ENCODE measurements at regions of chr1 and their contacts with region 1.

Region 1: DNA sequence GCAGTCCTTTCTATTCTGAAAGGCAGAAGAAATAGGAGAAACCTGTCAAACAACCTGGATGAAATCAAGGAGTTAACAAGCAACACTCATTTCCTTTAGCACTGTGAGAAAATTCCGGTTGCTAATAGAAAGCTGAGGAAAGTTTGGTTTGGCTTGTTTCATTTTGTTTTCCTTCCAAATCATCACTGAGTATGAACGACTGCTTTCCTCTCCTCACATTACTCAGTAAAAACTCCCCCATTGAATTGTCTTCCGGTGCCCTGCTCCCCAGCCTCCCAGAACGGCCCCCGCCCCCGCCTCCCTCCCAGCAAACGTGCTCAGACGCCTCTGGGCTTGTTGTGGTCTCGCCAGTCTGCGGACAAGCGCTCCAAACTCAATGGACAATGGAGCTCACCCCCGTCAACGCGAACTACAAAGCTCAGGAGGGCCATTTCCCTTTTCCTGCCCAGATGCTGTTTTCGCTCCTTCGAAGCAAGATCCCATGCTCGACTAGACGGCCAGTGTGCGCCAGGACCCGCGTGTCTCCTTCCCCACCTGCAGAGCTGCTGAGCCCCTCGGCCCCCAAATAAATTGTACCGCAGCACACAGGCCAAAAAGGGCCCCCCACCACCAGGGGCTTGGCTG is 747 bp downstream of the STX6 start:
- DNase-seq: peak in 9 of 10 donors; percentile 29 to 89 (median 51)

Region 2: GRCh38 chr1:180154325-180155181 is 867.4 kb before region 1 on chr1 and contains the start of gene QSOX1:
- intact Hi-C with region 1: loop called (anchors 10 kb)
- DNase-seq: peak; percentile 79 to 98 (median 90)

Region 3: DNA sequence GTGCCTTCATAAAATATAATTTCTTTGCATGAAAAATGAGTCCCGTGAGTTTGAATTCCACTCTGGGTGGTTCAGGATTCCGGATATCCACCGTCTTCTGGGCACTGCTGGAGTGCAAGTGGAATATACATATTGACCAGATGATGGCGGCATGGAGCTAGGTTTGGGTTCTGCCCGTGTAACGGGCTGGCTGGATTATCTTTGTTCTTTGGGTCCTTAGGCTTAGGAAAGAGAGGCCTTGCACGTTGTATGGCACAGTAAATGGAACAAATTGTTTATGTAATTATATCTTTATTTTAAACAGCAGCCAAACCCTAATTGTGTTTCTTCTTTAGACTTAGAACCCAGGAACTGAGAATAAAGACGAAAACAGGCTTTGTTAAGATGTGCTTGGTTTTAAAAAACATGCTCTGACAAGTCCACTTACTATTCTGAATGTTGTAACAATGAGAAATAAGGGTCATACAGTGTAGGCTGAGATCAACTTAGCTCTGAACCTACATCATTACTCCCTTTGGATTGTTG is 506.0 kb before region 1 on chr1:
- intact Hi-C with region 1: loop called (anchors 10 kb)
- DNase-seq: peak in 9 of 10 donors; percentile 28 to 95 (median 69)

Region 4: DNA sequence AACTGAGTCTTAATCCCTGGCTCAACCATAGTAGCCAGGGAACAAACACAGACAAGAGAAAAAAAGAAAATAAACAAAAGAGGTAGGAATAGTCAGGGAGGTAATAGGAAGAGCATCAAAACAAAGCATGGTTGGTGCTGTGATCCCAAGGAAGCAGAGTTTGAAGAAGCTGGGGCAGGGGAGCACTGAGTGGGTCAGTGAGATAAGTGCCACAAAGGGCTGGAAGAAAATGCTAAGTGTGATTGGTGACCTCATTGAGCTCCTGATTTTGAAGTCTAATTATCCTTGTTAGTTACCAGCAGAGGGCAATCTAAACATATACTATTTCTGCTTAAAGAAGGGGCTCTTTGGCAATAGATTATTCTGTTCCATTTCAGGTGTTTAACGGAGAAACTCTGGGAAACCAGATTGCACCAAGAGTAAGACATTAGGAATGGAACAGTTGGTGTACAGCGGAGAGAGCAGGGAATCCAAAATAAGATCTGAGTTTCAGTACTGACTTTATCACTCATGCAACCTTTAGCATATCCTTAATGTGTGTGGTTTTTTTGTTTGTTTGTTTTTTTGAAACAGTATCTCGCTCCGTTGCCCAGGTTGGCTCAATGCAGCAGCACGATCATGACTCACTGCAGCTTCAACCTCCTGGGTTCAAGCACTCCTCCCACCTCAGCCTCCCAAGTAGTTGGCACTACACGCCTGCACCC is 140.0 kb before region 1 on chr1:
- intact Hi-C with region 1: loop called (anchors 5 kb)
- DNase-seq: peak in 1 of 10 donors; percentile 51

Region 5: DNA sequence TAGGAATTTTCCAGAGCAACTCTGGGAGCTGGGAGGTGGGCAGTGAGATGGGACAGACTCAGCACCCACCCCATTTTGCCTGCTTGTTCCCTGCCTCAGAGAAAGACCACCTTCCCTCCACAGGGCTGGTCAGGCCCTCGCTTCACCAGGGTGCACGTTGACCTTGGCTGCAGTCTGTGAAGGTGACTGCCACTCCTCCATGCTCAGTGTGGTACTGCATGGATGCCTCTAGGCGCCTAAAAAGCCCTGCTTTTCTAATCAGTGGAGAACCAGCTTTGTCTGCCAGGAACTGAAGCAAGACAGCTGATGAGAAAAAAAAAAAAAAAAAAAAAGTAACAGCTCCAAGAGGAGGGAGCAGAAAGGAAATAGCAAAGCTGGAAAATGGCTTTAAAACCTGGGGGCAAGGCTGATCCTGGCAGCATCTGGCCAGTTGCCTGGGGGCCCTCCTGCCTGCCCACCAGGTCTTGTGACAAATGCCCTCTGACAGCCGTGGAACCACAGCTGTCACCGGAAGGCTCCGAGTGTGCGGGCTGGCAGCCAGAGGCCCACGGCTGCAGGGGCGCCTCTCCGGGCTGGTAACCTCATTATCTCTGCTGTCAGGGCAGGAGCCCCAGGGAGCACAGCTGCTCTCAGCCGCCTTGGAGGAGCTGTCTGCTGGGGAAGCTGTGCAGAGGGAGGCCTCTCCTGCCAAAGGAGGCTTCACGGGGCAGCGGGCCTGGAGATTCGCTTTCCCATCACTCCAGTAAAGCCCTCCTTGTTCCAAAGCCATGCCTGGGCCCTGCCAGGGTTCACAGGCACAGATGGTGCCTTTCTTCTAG is 95.5 kb before region 1 on chr1:
- intact Hi-C with region 1: loop called (anchors 5 kb)
- DNase-seq: peak; percentile 52 to 96 (median 68)

Region 6: DNA sequence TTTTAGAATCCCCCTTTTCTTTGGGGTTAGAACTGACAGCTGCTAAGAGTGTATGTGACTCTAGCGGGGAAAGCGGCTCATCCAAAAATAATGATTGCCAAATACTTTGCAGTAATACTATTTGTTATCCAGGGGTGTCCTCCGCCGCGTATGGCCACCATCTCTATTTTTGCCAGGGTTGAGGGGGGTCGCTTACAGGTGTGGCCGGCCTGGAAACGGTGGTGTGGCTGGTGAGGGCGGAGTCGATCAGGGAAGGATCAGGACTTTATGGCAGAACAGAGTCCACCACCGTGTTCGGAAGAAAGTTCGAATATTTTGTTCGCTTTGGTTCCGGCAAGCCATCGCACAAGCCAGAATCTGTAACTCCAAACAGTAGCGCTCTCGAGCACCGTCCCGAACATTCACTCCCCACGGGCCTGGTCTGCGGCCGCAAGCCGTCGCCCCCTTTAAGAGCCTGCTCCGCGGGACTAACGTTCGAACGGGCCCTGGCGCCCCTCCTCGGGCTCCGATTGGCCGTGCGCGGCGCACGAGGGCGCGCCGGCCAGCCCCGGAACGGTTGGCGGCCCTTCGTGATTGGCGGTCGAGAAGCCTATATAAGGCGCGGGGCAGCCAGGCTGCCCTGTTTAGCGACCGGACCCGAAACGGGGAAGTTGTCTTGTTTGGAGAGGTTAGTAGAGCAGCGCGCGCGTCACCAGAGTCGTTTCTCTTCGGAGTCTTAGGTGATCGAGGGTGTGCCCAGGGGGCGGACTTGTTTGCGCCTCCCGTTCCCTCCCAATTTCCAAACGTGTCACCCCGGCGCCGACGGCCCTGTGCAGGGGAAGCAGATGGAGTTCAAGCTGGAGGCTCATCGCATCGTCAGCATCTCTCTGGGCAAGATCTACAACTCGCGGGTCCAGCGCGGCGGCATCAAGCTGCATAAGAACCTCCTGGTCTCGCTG is 66.4 kb after region 1 on chr1 and contains the start of gene IER5:
- intact Hi-C with region 1: loop called (anchors 2 kb)
- DNase-seq: peak; percentile 92 to 99 (median 97)

Measured in posterior cingulate gyrus (tissue), 11 donors.